Posterior vena cava (tissue), 2 donors: ENCODE measurements at regions of chrX and their contacts with region 1.

Region 1: DNA sequence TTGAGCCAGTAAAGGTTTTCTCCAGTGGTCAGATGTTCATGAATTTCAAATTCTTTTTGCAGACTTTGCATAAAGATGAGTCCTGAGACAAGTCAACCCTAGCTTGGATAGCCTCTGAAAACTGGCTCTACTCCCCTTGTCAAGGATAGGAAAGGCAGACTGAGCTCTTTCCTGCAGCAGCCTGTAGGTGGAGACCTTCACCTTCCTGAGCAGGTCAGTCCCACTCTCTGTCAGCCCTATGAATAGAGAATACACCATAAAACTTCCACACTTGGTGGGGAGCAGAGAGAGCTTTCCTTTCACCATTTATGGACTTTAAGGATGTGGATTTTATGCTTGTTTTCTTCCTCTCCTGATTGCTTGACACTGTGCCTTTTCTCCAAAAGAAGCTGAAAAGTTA is 41.9 kb downstream of the PCDH19 start:
- DNase-seq: no peak

Region 2: GRCh38 chrX:100340491-100341141 is 27.6 kb before region 1 on chrX:
- intact Hi-C with region 1: loop called in 1 of 2 experiments (anchors 1 kb)
- DNase-seq: no peak

Region 3: GRCh38 chrX:100395781-100396180 is 27.6 kb after region 1 on chrX:
- intact Hi-C with region 1: no loop called
- DNase-seq: no peak